ENCODE measurements at regions of chr19 and their contacts with region 1.

Region 1: DNA sequence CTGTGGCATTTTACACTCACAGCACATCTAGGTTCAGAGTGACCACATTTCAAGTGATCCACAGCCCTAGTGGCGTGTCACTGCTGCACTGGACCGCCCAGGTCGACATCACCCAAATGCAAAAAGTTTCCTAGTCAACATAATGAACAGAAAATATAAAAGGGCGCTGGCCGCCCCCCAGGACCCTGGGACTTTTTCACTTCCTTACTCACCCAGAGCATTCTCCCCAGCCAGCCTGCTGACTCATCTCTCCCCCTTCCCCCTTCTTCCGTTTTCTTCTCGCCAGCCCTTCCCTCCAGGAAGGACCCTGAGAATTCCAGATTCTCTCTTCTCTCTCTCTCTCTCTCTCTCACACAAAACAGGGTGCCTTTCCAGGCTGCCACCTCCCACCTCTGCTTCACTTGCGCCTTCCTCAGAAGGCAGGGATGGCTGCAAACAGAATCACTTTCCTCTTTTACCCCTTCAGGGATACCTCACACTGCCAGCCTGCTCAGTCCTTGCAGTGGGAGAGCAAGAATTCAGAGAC is 21.0 kb upstream of the GRWD1 start:
- DNase-seq: no peak
- ATAC-seq: no peak
- H3K4me3 ChIP-seq: no peak overlapping the region
- H3K4me3 Mint-ChIP-seq: no peak overlapping the region
- H3K27ac ChIP-seq: no peak overlapping the region
- H3K27ac Mint-ChIP-seq: no peak overlapping the region
- H3K4me1 ChIP-seq: no peaks in the 10 kb centered on the region
- H3K4me1 Mint-ChIP-seq: peaks cover 0 to 5% (median 2%) of the 10 kb centered on the region in 3 donors
- H3K27me3 ChIP-seq: peaks cover 0 to 15% of the 10 kb centered on the region in 2 experiments
- H3K27me3 Mint-ChIP-seq: peaks cover 9% of the 10 kb centered on the region in 2 donors

Region 2: DNA sequence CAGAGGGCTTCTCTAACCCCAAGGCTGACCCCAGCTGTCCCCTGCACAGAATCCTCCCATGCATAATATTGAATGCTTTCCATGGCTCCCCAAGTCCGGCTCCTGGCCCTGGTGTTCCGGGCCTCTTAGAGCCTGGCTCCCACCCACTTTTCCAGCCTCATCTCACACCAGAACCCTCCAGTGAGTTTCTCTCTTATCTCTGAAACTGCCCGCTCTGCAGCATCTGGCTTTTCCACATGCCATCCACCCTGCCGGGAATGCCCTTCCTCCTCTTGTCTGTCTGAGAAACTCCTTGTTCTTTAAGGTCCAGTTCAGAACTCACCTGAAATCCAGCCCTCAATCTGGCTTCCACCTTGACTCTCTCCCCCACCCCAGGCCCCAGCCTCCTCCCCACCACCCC is 53.8 kb before region 1 on chr19:
- CTCF ChIA-PET with region 1: no interaction called
- POLR2A ChIA-PET with region 1: no interaction called
- DNase-seq: no peak
- ATAC-seq: no peak
- H3K4me3 ChIP-seq: no peak overlapping the region
- H3K4me3 Mint-ChIP-seq: no peak overlapping the region
- H3K27ac ChIP-seq: no peak overlapping the region
- H3K27ac Mint-ChIP-seq: no peak overlapping the region
- H3K4me1 ChIP-seq: no peaks in the 10 kb centered on the region
- H3K4me1 Mint-ChIP-seq: no peaks in the 10 kb centered on the region
- H3K27me3 ChIP-seq: peaks cover 0 to 15% of the 10 kb centered on the region in 2 experiments
- H3K27me3 Mint-ChIP-seq: no peaks in the 10 kb centered on the region

Region 3: DNA sequence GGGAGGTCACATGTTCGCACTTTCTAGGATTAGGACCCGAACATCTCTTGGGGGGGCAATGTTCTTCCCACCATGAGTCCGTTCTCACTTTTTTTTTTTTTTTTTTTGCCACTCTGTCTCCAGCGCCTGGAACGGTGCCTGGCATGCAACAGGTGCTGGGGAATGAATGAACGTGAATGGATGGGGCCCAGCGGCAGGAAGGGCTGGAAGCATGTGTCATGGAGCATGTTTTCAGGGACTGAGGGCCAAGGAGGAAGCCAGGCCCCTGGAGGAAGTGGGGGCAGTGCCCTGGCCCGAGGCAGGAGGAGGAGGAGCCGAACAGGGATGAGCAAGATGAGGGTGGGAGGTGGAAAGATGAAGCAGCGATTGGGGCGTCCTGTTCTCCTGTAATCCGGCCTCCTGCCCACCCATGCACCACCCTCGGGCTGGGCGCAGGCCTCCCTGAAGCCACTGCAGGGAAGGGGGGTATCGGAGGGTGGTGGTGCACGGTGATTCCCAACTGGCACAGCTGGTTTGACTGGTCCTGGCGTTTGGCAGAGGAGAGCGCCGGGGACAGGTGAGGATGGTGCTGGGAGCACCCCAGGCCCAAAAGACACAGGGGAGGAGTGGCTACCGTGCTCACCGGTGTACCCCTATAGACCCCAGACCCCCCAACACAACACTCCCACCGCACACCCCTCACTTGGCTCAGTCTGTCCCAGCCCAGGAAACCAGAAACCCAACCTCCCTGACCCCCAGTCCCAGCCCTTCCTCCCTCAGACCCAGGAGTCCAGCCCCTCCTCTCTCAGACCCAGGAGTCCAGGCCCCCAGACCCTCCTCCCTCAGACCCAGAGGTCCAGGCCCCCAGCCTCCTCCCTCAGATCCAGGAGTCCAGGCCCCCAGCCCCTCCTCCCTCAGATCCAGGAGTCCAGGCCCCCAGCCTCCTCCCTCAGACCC is 118.6 kb after region 1 on chr19:
- CTCF ChIA-PET with region 1: no interaction called
- POLR2A ChIA-PET with region 1: interaction called in 1 of 2 experiments, 13 read pairs
- DNase-seq: no peak
- ATAC-seq: no peak
- H3K4me3 ChIP-seq: no peak overlapping the region
- H3K4me3 Mint-ChIP-seq: no peak overlapping the region
- H3K27ac ChIP-seq: no peak overlapping the region
- H3K27ac Mint-ChIP-seq: no peak overlapping the region
- H3K4me1 ChIP-seq: no peaks in the 10 kb centered on the region
- H3K4me1 Mint-ChIP-seq: no peaks in the 10 kb centered on the region
- H3K27me3 ChIP-seq: peaks cover 0 to 31% of the 10 kb centered on the region in 2 experiments
- H3K27me3 Mint-ChIP-seq: no peaks in the 10 kb centered on the region